Transverse colon (tissue), 4 donors: ENCODE measurements at regions of chr7 and their contacts with region 1.

Region 1: GRCh38 chr7:45136106-45137060 is 21.2 kb upstream of the RAMP3 start:
- DNase-seq: peak; percentile 62
- H3K4me3 ChIP-seq: no peak overlapping the region
- H3K27ac ChIP-seq: no peak overlapping the region
- H3K4me1 ChIP-seq: peaks cover 0 to 9% (median 2%) of the 10 kb centered on the region in 4 donors
- H3K27me3 ChIP-seq: no peaks in the 10 kb centered on the region
- CTCF ChIP-seq: peak; percentile 76 to 84 (median 80)
- EP300 ChIP-seq: no peak
- POLR2A ChIP-seq: no peak

Region 2: DNA sequence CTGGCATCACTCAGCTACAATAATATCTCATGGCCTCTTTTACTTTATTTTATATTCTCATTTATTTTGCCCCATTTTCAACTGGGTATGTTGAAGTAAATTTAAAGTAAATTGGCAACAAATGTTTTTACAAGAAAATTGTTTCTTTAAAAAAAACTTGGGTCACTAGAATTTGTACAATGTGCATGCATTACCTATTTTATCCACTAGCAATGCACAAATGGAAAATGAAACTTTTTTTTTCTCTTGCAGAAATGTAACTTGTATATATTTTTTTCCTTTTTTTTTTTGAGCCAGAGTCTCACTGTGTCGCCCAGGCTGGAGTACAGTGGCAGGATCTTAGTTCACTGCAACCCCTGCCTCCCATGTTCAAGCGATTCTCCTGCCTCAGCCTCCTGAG is 278.2 kb before region 1 on chr7:
- in situ Hi-C with region 1: loop called in 2 of 4 experiments (anchors 10 to 25 kb)
- intact Hi-C with region 1: no loop called
- DNase-seq: no peak
- H3K4me3 ChIP-seq: no peak overlapping the region
- H3K27ac ChIP-seq: no peak overlapping the region
- H3K4me1 ChIP-seq: no peaks in the 10 kb centered on the region
- H3K27me3 ChIP-seq: no peaks in the 10 kb centered on the region
- CTCF ChIP-seq: peak in 4 of 5 experiments; percentile 13 to 26 (median 22)
- EP300 ChIP-seq: no peak
- POLR2A ChIP-seq: no peak

Region 3: DNA sequence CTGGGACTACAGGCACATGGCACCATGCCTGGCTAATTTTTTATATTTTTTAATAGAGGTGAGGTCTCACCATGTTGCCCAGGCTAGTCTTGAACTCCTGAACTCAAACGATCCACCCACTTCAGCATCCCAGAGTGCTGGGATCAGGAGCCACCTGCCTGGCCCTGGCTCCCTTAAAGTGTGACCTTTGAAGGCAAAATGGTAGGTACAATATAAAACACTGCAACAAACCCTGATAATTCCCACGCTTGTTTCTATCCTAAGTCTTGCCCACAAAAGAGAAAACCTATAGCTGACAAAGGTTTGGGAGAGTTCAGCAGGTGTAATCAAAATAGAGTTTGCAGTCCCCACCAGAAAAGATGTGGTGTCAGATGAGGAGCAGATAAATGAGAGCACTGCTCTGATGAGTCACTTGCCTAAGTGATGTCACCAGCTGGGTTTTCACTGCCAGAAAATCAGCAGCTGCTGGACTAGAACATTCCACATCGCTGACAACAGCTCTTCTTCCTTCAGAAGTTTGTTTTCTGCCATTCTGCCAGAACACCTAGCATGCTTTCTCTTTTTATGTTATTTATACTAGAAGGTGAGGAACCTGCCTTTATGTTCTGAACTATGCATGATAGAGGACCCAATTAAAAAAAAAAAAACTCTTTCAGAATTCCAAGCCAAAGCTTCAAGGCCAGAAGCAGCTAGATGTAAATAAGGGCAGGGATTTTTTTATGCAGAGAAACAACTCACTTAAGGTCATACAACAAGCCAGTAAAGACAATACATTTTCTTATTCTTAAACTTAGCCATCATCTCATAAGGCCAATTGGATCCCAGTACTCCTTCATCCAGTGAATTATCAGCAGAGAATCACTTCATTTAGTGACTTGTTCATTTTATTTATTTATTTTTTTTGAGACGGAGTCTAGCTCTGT is 269.0 kb before region 1 on chr7:
- in situ Hi-C with region 1: loop called in 1 of 4 experiments (anchors 25 kb)
- intact Hi-C with region 1: no loop called
- DNase-seq: no peak
- H3K4me3 ChIP-seq: no peak overlapping the region
- H3K27ac ChIP-seq: peak overlapping the region; percentile 32 to 58 (median 54)
- H3K4me1 ChIP-seq: peaks cover 0 to 10% (median 0%) of the 10 kb centered on the region in 4 donors
- H3K27me3 ChIP-seq: no peaks in the 10 kb centered on the region
- CTCF ChIP-seq: no peak
- EP300 ChIP-seq: no peak
- POLR2A ChIP-seq: no peak

Region 4: GRCh38 chr7:44962483-44963251 is 173.7 kb before region 1 on chr7:
- in situ Hi-C with region 1: loop called in 1 of 4 experiments (anchors 10 kb)
- intact Hi-C with region 1: no loop called
- DNase-seq: no peak
- H3K4me3 ChIP-seq: peak overlapping the region in 3 of 4 donors; percentile 12 to 39 (median 33)
- H3K27ac ChIP-seq: no peak overlapping the region
- H3K4me1 ChIP-seq: peaks cover 0 to 13% (median 11%) of the 10 kb centered on the region in 4 donors
- H3K27me3 ChIP-seq: peaks cover 17% of the 10 kb centered on the region
- CTCF ChIP-seq: no peak
- EP300 ChIP-seq: no peak
- POLR2A ChIP-seq: no peak

Region 5: DNA sequence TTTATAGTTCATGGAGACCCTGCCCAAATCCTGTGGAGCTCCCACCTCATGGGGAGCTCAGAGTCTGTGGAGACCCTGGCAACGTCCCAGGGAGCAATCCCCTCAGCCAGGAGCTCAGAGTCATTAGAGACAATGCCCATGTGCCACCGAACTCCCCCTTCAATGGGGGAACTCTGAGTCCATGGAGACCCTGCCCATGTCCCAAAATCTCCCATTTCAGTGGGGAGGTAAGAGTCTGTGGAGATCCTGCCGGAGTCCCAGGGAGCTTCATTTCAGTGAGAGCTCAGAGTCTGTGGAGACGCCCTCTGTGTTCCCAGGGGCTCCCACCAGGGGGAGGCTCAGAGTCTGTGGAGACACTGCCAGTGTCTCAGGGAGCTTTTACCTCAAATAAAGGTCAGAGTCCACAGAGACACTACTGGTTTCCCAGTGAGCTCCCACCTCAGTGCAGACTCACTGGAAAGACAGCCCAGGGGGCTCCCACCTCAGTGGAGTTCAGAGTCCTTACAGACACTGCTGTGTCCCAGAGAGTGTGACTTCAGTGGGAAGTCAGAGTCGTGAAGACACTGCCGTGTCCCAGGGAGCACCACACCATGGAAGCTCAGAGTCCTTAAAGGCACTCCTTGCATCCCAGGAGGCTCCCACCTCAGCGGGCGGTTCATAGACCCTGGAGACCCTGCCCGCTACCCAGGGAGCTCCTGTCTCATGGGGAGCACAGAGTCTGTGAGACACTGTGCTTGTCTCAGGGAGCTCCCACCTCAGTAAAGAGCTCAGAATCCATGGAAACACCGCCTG is 162.6 kb before region 1 on chr7:
- in situ Hi-C with region 1: loop called in 1 of 4 experiments (anchors 10 kb)
- intact Hi-C with region 1: loop called (anchors 10 kb)
- DNase-seq: peak; percentile 68
- H3K4me3 ChIP-seq: no peak overlapping the region
- H3K27ac ChIP-seq: no peak overlapping the region
- H3K4me1 ChIP-seq: no peaks in the 10 kb centered on the region
- H3K27me3 ChIP-seq: no peaks in the 10 kb centered on the region
- CTCF ChIP-seq: peak; percentile 35 to 62 (median 53)
- EP300 ChIP-seq: no peak
- POLR2A ChIP-seq: no peak